HepG2 (cell line): ENCODE measurements at regions of chr11 and their contacts with region 1.

Region 1: DNA sequence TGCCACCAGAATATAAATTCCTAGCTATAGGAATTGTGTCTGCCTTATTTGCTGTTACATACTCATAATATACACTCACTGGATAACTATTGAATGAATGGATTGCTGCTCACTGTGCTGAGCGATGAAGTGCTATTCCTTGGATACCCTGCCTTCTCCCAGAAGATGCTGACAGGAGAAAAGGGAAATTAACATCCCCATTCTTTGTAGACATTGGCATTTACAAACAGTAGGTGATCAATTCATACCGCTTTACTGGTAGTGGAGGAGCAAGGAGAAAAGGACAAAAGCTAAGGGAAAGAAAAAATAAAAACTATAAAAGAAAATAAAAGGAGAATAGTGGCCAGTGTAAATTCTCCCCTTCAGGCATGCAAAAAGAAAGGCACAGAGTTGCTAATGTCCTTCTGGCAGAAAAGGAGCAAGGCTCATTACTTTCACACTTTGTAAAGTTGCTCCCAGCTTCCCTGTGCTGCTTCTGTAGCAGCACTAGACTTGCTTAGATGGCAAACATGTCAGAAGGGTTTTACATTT is 183.0 kb downstream of the LUZP2 start:
- DNase-seq: no peak
- ATAC-seq: no peak
- H3K4me3 ChIP-seq: no peak overlapping the region
- H3K27ac ChIP-seq: no peak overlapping the region
- H3K4me1 ChIP-seq: no peaks in the 10 kb centered on the region
- H3K27me3 ChIP-seq: no peaks in the 10 kb centered on the region
- CTCF ChIP-seq: no peak
- EP300 ChIP-seq: no peak
- POLR2A ChIP-seq: no peak
- RAD21 ChIP-seq: no peak

Region 2: GRCh38 chr11:24708616-24709015 is 28.7 kb after region 1 on chr11:
- CTCF ChIA-PET with region 1: no interaction called
- POLR2A ChIA-PET with region 1: no interaction called
- in situ Hi-C with region 1: no loop called
- intact Hi-C with region 1: loop called (anchors 1 kb)
- DNase-seq: no peak
- ATAC-seq: no peak
- H3K4me3 ChIP-seq: no peak overlapping the region
- H3K27ac ChIP-seq: no peak overlapping the region
- H3K4me1 ChIP-seq: no peaks in the 10 kb centered on the region
- H3K27me3 ChIP-seq: no peaks in the 10 kb centered on the region
- CTCF ChIP-seq: no peak
- EP300 ChIP-seq: no peak
- POLR2A ChIP-seq: no peak
- RAD21 ChIP-seq: no peak

Region 3: GRCh38 chr11:24723231-24723630 is 43.3 kb after region 1 on chr11:
- CTCF ChIA-PET with region 1: no interaction called
- POLR2A ChIA-PET with region 1: no interaction called
- in situ Hi-C with region 1: no loop called
- intact Hi-C with region 1: no loop called
- DNase-seq: no peak
- ATAC-seq: no peak
- H3K4me3 ChIP-seq: no peak overlapping the region
- H3K27ac ChIP-seq: no peak overlapping the region
- H3K4me1 ChIP-seq: no peaks in the 10 kb centered on the region
- H3K27me3 ChIP-seq: no peaks in the 10 kb centered on the region
- CTCF ChIP-seq: no peak
- EP300 ChIP-seq: no peak
- POLR2A ChIP-seq: no peak
- RAD21 ChIP-seq: no peak